A549 (cell line): ENCODE measurements at regions of chr20 and their contacts with region 1.

Region 1: GRCh38 chr20:22586645-22587310 is 2.4 kb upstream of the FOXA2 start:
- DNase-seq: peak; percentile 71 to 83
- ATAC-seq: peak; percentile 35 to 63
- H3K4me3 ChIP-seq: peak overlapping the region; percentile 54
- H3K27ac ChIP-seq: peak overlapping the region; percentile 94 to 96
- H3K4me1 ChIP-seq: peaks cover 24% of the 10 kb centered on the region
- CTCF ChIP-seq: peak; percentile 98
- EP300 ChIP-seq: no peak
- POLR2A ChIP-seq: no peak
- RAD21 ChIP-seq: peak; percentile 94 to 100

Region 2: DNA sequence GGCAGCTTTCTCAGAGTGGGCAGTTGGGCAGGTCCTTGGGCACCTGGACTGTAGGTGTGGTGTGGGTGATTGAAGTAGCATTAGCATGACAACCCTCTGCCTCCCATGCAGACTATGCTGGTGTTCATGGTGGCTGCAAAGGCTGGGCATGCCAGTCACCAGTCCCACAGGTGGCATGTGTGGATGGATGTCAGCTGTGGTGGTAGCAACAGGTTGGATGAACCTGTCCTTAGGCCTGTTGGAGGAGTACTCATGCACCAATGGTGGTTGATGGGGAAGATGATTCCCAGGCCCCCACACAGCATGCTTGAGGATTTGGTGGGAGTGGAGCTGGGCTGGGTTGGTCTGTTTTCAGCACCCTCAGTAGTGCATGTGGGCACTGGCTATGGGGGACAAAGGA is 630.2 kb before region 1 on chr20:
- CTCF ChIA-PET with region 1: no interaction called
- POLR2A ChIA-PET with region 1: no interaction called
- DNase-seq: no peak
- ATAC-seq: peak in 1 of 2 experiments; percentile 13; a peak in 1 of 6 replicates
- H3K4me3 ChIP-seq: no peak overlapping the region
- H3K27ac ChIP-seq: no peak overlapping the region
- H3K4me1 ChIP-seq: no peaks in the 10 kb centered on the region
- CTCF ChIP-seq: no peak
- EP300 ChIP-seq: no peak
- POLR2A ChIP-seq: no peak
- RAD21 ChIP-seq: no peak

Region 3: DNA sequence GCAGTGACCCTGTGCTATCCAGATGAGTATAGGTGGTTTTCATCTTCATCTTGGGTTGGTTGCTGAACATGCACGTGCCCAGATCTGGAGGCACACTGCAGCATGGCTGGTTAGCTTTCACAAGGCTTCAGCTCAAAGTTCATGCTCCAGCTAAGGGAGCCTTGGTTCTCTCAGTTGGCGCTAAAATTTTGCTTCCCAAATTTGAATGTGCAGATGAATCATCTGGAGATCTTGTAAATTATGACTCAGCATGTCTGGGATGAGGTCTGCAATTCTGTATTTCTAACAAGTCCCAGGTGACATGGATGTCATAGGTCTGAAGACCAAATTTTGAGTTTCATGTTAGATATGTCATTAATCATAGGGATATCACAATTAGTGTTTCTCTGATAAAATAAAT is 233.2 kb before region 1 on chr20:
- CTCF ChIA-PET with region 1: interaction called, 60 read pairs
- POLR2A ChIA-PET with region 1: interaction called, 3 read pairs
- DNase-seq: peak in 1 of 2 experiments; percentile 37
- ATAC-seq: no peak
- H3K4me3 ChIP-seq: no peak overlapping the region
- H3K27ac ChIP-seq: peak overlapping the region in 1 of 2 experiments; percentile 16; a peak in 2 of 6 replicates
- H3K4me1 ChIP-seq: peaks cover 15% of the 10 kb centered on the region
- CTCF ChIP-seq: no peak
- EP300 ChIP-seq: no peak
- POLR2A ChIP-seq: no peak
- RAD21 ChIP-seq: no peak

Region 4: DNA sequence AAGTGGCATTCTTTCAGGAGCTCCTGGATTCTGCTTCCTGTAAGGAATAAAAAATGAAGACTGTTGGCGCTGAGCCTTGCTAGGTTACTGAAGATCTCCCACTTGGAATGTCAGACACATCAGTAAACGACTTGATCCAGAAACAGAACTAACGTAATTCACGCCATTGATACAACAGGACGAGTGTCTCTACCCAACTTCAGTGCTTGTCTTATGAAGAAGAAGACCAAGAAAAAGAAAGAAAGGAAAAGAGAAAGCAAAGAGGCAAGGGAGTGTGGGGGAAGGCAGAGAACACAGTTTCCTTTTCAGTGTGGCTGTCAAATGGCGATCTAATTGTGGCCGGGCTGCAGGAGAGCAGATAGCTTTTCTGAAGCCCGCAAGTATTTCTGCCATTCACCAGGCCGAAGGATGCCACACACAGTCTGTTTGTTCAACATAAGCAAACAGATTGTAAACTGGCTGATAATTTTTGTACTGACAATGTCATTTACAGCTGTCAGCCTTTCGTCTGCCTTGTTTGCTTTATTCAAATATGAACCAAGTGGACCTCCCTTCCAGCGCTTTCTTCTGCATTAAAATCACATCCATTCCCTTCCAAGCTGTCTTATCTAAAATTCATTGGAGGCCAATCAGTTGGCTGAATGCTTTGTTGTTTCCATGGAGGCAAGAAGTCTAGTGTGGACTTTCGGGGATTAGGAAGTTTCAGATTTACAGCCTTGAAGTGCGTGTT is 183.0 kb before region 1 on chr20:
- CTCF ChIA-PET with region 1: interaction called, 30 read pairs
- POLR2A ChIA-PET with region 1: interaction called, 12 read pairs
- DNase-seq: peak in 1 of 2 experiments; percentile 92
- ATAC-seq: peak; percentile 62 to 78
- H3K4me3 ChIP-seq: peak overlapping the region; percentile 25
- H3K27ac ChIP-seq: peak overlapping the region; percentile 88 to 98
- H3K4me1 ChIP-seq: peaks cover 62% of the 10 kb centered on the region
- CTCF ChIP-seq: no peak; the same call in 2 of the 3 replicates
- EP300 ChIP-seq: peak; percentile 62 to 74; a peak in 2 of 5 replicates
- POLR2A ChIP-seq: no peak
- RAD21 ChIP-seq: peak in 1 of 2 experiments; percentile 9; a peak in 2 of 5 replicates

Region 5: GRCh38 chr20:22490287-22491193 is 96.2 kb before region 1 on chr20:
- CTCF ChIA-PET with region 1: interaction called, 88 read pairs
- POLR2A ChIA-PET with region 1: interaction called, 7 read pairs
- DNase-seq: peak; percentile 91 to 94
- ATAC-seq: peak; percentile 92 to 94
- H3K4me3 ChIP-seq: peak overlapping the region; percentile 24
- H3K27ac ChIP-seq: peak overlapping the region; percentile 78 to 85
- H3K4me1 ChIP-seq: peaks cover 33% of the 10 kb centered on the region
- CTCF ChIP-seq: peak; percentile 51
- EP300 ChIP-seq: peak in 1 of 2 experiments; percentile 31; a peak in 1 of 5 replicates
- POLR2A ChIP-seq: 0 out of 2 replicates have a peak, but pooled peaks have one; percentile 12
- RAD21 ChIP-seq: peak; percentile 62

Region 6: GRCh38 chr20:22601361-22602141 is 14.8 kb after region 1 on chr20:
- CTCF ChIA-PET with region 1: interaction called, 139 read pairs
- POLR2A ChIA-PET with region 1: interaction called, 10 read pairs
- DNase-seq: peak; percentile 51 to 70
- ATAC-seq: peak; percentile 87 to 89
- H3K4me3 ChIP-seq: no peak overlapping the region
- H3K27ac ChIP-seq: peak overlapping the region; percentile 50 to 56; a peak in 5 of 6 replicates
- H3K4me1 ChIP-seq: peaks cover 22% of the 10 kb centered on the region
- CTCF ChIP-seq: no peak
- EP300 ChIP-seq: no peak
- POLR2A ChIP-seq: no peak
- RAD21 ChIP-seq: no peak

Region 7: GRCh38 chr20:22663528-22664025 is 76.8 kb after region 1 on chr20:
- CTCF ChIA-PET with region 1: interaction called, 15 read pairs
- POLR2A ChIA-PET with region 1: no interaction called
- DNase-seq: no peak
- ATAC-seq: peak in 1 of 2 experiments; percentile 43; a peak in 3 of 6 replicates
- H3K4me3 ChIP-seq: no peak overlapping the region
- H3K27ac ChIP-seq: no peak overlapping the region
- H3K4me1 ChIP-seq: no peaks in the 10 kb centered on the region
- CTCF ChIP-seq: no peak
- EP300 ChIP-seq: no peak
- POLR2A ChIP-seq: no peak
- RAD21 ChIP-seq: no peak

Region 8: DNA sequence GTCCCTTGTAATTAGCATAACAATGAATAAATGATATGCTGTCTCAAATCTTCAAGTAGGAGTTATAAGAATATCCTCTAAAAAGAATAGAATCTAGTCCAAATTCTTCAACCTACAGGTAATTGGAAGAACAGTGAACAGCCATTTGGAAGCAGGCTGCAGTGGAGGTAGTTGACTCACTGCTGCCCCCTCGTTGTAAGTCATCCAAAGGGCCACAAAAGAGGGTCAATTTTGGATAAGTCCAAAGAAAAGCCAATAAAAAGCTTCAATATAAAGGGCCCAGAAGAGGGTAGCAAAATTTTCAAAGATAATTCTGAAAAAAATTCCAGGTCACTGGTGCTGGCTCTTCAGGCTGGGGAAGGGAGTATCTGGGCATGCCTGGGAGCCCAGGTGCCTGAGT is 387.6 kb after region 1 on chr20:
- CTCF ChIA-PET with region 1: no interaction called
- POLR2A ChIA-PET with region 1: no interaction called
- DNase-seq: peak in 1 of 2 experiments; percentile 60
- ATAC-seq: peak in 1 of 2 experiments; percentile 71; a peak in 3 of 6 replicates
- H3K4me3 ChIP-seq: no peak overlapping the region
- H3K27ac ChIP-seq: peak overlapping the region; percentile 7 to 14; a peak in 3 of 6 replicates
- H3K4me1 ChIP-seq: 0 out of 3 replicates have a peak, but pooled peaks cover 3% of the 10 kb centered on the region
- CTCF ChIP-seq: peak; percentile 40
- EP300 ChIP-seq: no peak
- POLR2A ChIP-seq: no peak
- RAD21 ChIP-seq: peak; percentile 51 to 73; a peak in 4 of 5 replicates